Heart right ventricle (tissue), 16 donors: ENCODE measurements at regions of chr4 and their contacts with region 1.

Region 1: GRCh38 chr4:25367004-25367621 is 9.9 kb upstream of the ANAPC4 start:
- DNase-seq: no peak
- ATAC-seq: no peak
- H3K4me3 ChIP-seq: no peak overlapping the region
- H3K27ac ChIP-seq: no peak overlapping the region
- H3K4me1 ChIP-seq: no peaks in the 10 kb centered on the region
- H3K27me3 ChIP-seq: no peaks in the 10 kb centered on the region
- CTCF ChIP-seq: peak; percentile 34 to 74 (median 67)

Region 2: GRCh38 chr4:25159884-25160713 is 207.0 kb before region 1 on chr4 and contains the start of gene SEPSECS:
- intact Hi-C with region 1: loop called in 1 of 10 experiments (anchors 10 kb)
- DNase-seq: peak; percentile 96 to 99
- ATAC-seq: peak; percentile 94 to 97 (median 96)
- H3K4me3 ChIP-seq: peak within 1 kb of the TSS; percentile 57 to 99 (median 82)
- H3K27ac ChIP-seq: peak within 1 kb of the TSS; percentile 79 to 99 (median 94)
- H3K4me1 ChIP-seq: peaks cover 0 to 37% (median 19%) of the 10 kb centered on the region in 9 donors
- H3K27me3 ChIP-seq: no peaks in the 10 kb centered on the region
- CTCF ChIP-seq: no peak
- total RNA-seq, gene SEPSECS: 2.9 to 9.1 (median 6.2) TPM

Region 3: GRCh38 chr4:25172961-25173915 is 193.9 kb before region 1 on chr4:
- intact Hi-C with region 1: loop called in 4 of 10 experiments (anchors 10 kb)
- DNase-seq: peak in 1 of 2 donors; percentile 77
- ATAC-seq: peak; percentile 95 to 98 (median 96)
- H3K4me3 ChIP-seq: no peak overlapping the region
- H3K27ac ChIP-seq: peak overlapping the region in 9 of 10 donors; percentile 49 to 85 (median 78)
- H3K4me1 ChIP-seq: peaks cover 0 to 40% (median 21%) of the 10 kb centered on the region in 9 donors
- H3K27me3 ChIP-seq: no peaks in the 10 kb centered on the region
- CTCF ChIP-seq: peak in 1 of 9 donors; percentile 19

Region 4: DNA sequence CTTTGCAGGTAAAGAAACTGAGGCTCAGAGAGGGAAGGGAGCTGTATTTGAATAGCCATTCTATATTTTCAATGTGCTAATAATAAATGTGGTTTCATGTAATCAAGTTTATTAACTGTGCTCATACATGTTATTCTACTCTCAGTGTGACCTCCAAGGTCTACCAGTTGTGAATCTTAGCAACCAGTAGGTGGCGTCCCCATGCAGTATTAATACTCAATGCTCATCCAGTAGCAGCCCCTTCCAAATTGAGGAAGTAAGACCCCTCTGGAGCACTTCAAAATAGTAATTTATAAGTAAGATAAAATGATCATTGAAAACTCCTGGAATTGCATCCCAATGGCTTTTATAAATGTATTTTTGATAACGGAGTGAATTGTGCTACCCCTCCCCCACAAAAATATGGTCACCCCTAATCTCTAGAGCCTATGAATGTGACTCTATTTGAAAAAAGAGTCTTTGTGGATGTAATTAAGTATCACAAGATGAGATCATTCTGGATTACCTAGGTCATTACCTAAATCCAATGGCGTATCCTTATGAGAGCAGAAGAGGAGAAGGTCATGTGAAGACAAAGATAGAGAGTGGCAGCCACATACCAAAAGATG is 186.5 kb before region 1 on chr4:
- intact Hi-C with region 1: loop called in 6 of 10 experiments (anchors 5 to 10 kb)
- DNase-seq: no peak
- ATAC-seq: peak in 4 of 8 donors; percentile 52 to 77 (median 66)
- H3K4me3 ChIP-seq: no peak overlapping the region
- H3K27ac ChIP-seq: no peak overlapping the region
- H3K4me1 ChIP-seq: peaks cover 0 to 4% (median 0%) of the 10 kb centered on the region in 9 donors
- H3K27me3 ChIP-seq: no peaks in the 10 kb centered on the region
- CTCF ChIP-seq: peak in 8 of 9 donors; percentile 16 to 67 (median 60)

Region 5: DNA sequence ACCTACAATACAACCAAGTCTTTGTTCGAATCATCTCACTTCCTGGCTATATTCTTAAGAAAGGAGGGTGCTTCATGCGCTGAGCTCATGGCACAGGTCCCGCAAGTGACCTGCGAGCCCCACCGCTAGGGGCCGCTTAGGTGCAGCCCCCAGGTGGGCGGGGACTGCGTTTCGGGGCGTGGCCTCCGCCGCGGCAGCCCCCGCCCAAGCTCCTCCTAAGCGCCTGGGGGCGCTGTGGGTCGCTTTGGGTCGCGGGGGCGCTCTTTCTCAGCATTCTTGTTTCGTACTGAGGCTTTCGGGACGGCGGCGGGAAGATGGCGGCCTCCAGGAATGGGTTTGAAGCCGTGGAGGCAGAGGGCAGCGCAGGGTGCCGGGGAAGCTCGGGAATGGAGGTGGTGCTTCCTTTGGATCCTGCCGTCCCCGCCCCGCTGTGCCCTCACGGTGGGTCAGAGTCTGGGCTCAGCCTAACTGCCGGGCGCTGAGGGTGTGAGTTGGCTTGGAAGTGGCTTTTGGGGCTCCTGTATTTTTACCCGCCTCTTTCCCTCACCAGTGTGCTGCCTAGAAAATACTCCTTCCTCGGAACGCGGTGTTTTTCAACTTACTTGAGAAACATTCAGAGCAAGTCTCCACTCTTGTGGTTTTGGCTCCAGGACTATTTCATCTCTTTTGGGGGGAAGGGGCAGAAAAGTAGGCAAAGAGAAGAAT is 54.5 kb before region 1 on chr4 and contains the start of gene ZCCHC4:
- intact Hi-C with region 1: loop called in 1 of 10 experiments (anchors 10 kb)
- DNase-seq: peak; percentile 90
- ATAC-seq: peak; percentile 96 to 99 (median 99)
- H3K4me3 ChIP-seq: peak within 1 kb of the TSS; percentile 64 to 93 (median 75)
- H3K27ac ChIP-seq: peak within 1 kb of the TSS in 9 of 10 donors; percentile 32 to 87 (median 69)
- H3K4me1 ChIP-seq: peaks cover 2 to 26% (median 8%) of the 10 kb centered on the region in 9 donors
- H3K27me3 ChIP-seq: no peaks in the 10 kb centered on the region
- CTCF ChIP-seq: peak in 8 of 9 donors; percentile 96 to 100 (median 99)
- total RNA-seq, gene ZCCHC4: 6.8 to 9.6 (median 7.5) TPM